Ovary (tissue), 10 donors: ENCODE measurements at regions of chr19 and their contacts with region 1.

Region 1: DNA sequence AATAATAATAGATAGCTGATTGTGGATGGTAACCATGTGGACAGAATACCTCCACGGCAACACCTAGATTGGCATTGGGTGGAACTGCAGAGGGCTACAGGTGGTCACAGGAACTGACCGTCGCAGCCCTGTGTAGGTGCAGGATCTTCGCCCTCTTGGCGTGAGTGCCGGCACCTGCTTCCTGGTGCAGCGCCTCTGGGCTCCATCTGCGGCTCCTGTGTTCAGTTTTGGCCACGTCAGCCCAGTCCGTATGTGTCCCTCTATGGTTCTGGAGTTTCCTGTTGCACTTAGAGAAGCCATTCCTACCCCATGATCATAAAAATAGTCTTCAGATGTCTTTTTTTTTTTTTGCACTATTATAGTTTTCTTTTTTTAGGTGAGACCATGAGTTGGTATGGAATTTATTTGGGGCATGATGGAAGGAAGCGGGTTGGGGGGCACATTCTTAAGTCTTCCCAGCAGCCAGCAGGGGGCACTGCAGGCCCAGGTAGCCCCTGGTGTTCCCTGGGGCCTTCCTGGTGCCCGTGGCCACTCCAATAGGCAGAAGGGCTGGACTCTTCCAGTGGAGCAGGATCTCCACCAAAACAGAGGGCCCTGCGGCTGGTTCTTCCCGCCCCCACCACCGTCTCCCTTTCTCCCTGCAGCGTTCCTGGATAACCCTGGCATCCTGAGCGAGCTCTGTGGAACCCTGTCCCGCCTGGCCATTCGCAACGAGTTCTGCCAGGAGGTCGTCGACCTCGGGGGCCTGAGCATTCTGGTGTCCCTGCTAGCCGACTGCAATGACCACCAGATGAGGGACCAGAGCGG is 10.1 kb upstream of the SLC25A42 start:
- DNase-seq: peak; percentile 72 to 87 (median 81)
- H3K4me3 ChIP-seq: no peak overlapping the region
- H3K27ac ChIP-seq: no peak overlapping the region
- H3K4me1 ChIP-seq: no peaks in the 10 kb centered on the region
- H3K27me3 ChIP-seq: no peaks in the 10 kb centered on the region
- CTCF ChIP-seq: peak; percentile 42 to 76 (median 62)
- EP300 ChIP-seq: no peak
- POLR2A ChIP-seq: no peak

Region 2: GRCh38 chr19:19138169-19138981 is 84.7 kb after region 1 on chr19 and contains the start of gene TMEM161A:
- intact Hi-C with region 1: loop called in 3 of 4 experiments (anchors 2 to 10 kb)
- DNase-seq: peak; percentile 97 to 99 (median 98)
- H3K4me3 ChIP-seq: peak within 1 kb of the TSS; percentile 73
- H3K27ac ChIP-seq: peak within 1 kb of the TSS in 1 of 2 donors; percentile 34
- H3K4me1 ChIP-seq: peaks cover 10% of the 10 kb centered on the region
- H3K27me3 ChIP-seq: no peaks in the 10 kb centered on the region
- CTCF ChIP-seq: no peak
- EP300 ChIP-seq: no peak
- POLR2A ChIP-seq: peak; percentile 48
- total RNA-seq, gene TMEM161A: 15.9 to 33.9 (median 23.9) TPM

Region 3: GRCh38 chr19:19145684-19146608 is 92.2 kb after region 1 on chr19:
- intact Hi-C with region 1: loop called in 2 of 4 experiments (anchors 5 to 10 kb)
- DNase-seq: peak; percentile 62 to 90 (median 85)
- H3K4me3 ChIP-seq: no peak overlapping the region
- H3K27ac ChIP-seq: no peak overlapping the region
- H3K4me1 ChIP-seq: no peaks in the 10 kb centered on the region
- H3K27me3 ChIP-seq: no peaks in the 10 kb centered on the region
- CTCF ChIP-seq: peak; percentile 89 to 93 (median 89)
- EP300 ChIP-seq: no peak
- POLR2A ChIP-seq: no peak

Region 4: GRCh38 chr19:19170053-19170872 is 116.6 kb after region 1 on chr19 and contains the start of gene MEF2B:
- intact Hi-C with region 1: loop called in 1 of 4 experiments (anchors 10 kb)
- DNase-seq: peak; percentile 37 to 81 (median 64)
- H3K4me3 ChIP-seq: no peak within 1 kb of the TSS
- H3K27ac ChIP-seq: no peak within 1 kb of the TSS
- H3K4me1 ChIP-seq: peaks cover 7% of the 10 kb centered on the region
- H3K27me3 ChIP-seq: no peaks in the 10 kb centered on the region
- CTCF ChIP-seq: no peak
- EP300 ChIP-seq: no peak
- POLR2A ChIP-seq: no peak
- total RNA-seq, gene MEF2B: 0.46 to 3.6 (median 2.1) TPM in 6 of 7 donors, not detected in the other

Region 5: GRCh38 chr19:19203012-19203856 is 149.5 kb after region 1 on chr19 and contains the start of gene NR2C2AP:
- intact Hi-C with region 1: no loop called
- DNase-seq: peak; percentile 89 to 95 (median 92)
- H3K4me3 ChIP-seq: peak within 1 kb of the TSS; percentile 51
- H3K27ac ChIP-seq: peak within 1 kb of the TSS; percentile 52 to 54
- H3K4me1 ChIP-seq: peaks cover 3% of the 10 kb centered on the region
- H3K27me3 ChIP-seq: no peaks in the 10 kb centered on the region
- CTCF ChIP-seq: peak in 1 of 3 donors; percentile 4
- EP300 ChIP-seq: no peak
- POLR2A ChIP-seq: no peak
- total RNA-seq, gene NR2C2AP: 12.5 to 24.4 (median 14.9) TPM

Region 6: DNA sequence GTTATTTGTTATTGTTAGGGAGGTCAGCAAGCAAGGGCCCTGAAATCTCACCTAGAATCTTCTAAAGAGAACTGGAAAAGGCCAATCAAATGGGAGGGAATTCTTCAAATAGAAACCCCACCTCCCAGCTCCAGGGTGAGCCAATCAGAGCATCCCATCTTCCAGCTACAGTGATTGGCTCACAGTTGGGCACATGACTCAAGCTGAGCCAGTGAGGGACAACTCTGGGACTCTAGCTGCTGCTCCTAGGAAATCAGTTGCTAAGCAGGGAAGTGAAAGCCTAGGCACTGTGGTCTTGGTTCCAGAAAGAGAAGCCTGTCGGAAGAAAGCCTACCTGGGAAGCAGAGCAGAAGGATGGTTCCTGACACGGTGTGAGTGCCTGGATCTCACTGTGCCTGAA is 206.0 kb after region 1 on chr19:
- intact Hi-C with region 1: no loop called
- DNase-seq: no peak
- H3K4me3 ChIP-seq: no peak overlapping the region
- H3K27ac ChIP-seq: no peak overlapping the region
- H3K4me1 ChIP-seq: peaks cover 3% of the 10 kb centered on the region
- H3K27me3 ChIP-seq: no peaks in the 10 kb centered on the region
- CTCF ChIP-seq: no peak
- EP300 ChIP-seq: no peak
- POLR2A ChIP-seq: no peak